BJ (cell line): ENCODE measurements at regions of chr1 and their contacts with region 1.

Region 1: GRCh38 chr1:229479660-229480399 is 28.3 kb downstream of the NUP133 start:
- DNase-seq: no peak
- H3K4me3 ChIP-seq: no peak overlapping the region
- H3K27me3 ChIP-seq: no peaks in the 10 kb centered on the region
- CTCF ChIP-seq: no peak

Region 2: GRCh38 chr1:229298420-229298819 is 181.4 kb before region 1 on chr1:
- CTCF ChIA-PET with region 1: no interaction called
- POLR2A ChIA-PET with region 1: no interaction called
- DNase-seq: no peak
- H3K4me3 ChIP-seq: no peak overlapping the region
- H3K27me3 ChIP-seq: no peaks in the 10 kb centered on the region
- CTCF ChIP-seq: no peak

Region 3: DNA sequence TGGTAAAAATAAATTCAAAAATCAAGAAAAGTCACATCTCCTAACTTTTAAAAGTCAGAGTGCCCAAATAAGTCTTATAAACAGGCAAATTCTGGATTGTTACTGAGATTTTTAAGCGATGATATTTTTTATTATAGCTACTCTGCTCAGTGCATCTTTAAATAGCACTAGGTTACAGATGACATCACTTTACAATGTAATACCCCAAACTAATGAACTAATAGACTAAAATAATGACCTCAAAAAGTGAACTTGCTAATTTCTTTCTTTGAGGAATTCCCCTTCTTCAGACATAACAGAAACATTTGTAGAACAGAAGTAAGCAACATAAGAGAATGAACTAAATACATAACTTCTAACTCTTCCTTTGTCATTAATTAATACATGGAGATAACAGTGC is 12.9 kb before region 1 on chr1:
- CTCF ChIA-PET with region 1: interaction called, 10 read pairs
- POLR2A ChIA-PET with region 1: no interaction called
- DNase-seq: no peak
- H3K4me3 ChIP-seq: no peak overlapping the region
- H3K27me3 ChIP-seq: no peaks in the 10 kb centered on the region
- CTCF ChIP-seq: no peak

Region 4: GRCh38 chr1:229495782-229496181 is 16.0 kb after region 1 on chr1:
- CTCF ChIA-PET with region 1: interaction called, 41 read pairs
- POLR2A ChIA-PET with region 1: no interaction called
- DNase-seq: no peak
- H3K4me3 ChIP-seq: no peak overlapping the region
- H3K27me3 ChIP-seq: no peaks in the 10 kb centered on the region
- CTCF ChIP-seq: no peak

Region 5: DNA sequence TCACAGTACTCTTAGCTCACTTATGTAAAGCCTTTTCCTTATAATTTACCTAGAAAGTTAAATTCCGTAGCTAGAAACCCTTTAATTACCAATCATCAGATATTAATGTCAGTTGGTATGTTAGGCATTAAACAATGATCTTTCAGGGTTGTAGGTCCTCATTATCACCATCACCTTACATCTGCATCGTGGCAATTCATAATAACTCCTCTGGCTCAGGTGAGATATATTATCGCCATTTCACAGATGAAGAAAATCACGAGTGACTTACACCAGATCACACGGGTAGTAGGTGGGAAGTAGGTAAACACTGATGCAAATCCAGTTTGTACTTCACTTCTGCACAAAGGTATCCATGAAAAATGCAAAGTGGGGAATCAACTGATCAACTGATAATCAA is 27.7 kb after region 1 on chr1:
- CTCF ChIA-PET with region 1: interaction called, 10 read pairs
- POLR2A ChIA-PET with region 1: no interaction called
- DNase-seq: no peak
- H3K4me3 ChIP-seq: peak overlapping the region; percentile 83
- H3K27me3 ChIP-seq: no peaks in the 10 kb centered on the region
- CTCF ChIP-seq: no peak

Region 6: GRCh38 chr1:229614701-229615100 is 134.9 kb after region 1 on chr1:
- CTCF ChIA-PET with region 1: no interaction called
- POLR2A ChIA-PET with region 1: no interaction called
- DNase-seq: no peak
- H3K4me3 ChIP-seq: no peak overlapping the region
- H3K27me3 ChIP-seq: no peaks in the 10 kb centered on the region
- CTCF ChIP-seq: no peak